K562 (cell line): ENCODE measurements at regions of chr2 and their contacts with region 1.

Region 1: GRCh38 chr2:64457524-64457923 is 3.6 kb downstream of the LGALSL start:
- DNase-seq: no peak
- ATAC-seq: 0 out of 3 replicates have a peak, but pooled peaks have one; percentile 25
- H3K4me3 ChIP-seq: no peak overlapping the region
- H3K27ac ChIP-seq: no peak overlapping the region
- H3K4me1 ChIP-seq: peaks cover 0 to 14% of the 10 kb centered on the region in 2 experiments; a peak in 2 of 5 replicates
- H3K27me3 ChIP-seq: peaks cover 14 to 21% of the 10 kb centered on the region in 2 experiments
- CTCF ChIP-seq: peak in 2 of 3 experiments; percentile 16 to 49; a peak in 3 of 6 replicates
- EP300 ChIP-seq: no peak
- POLR2A ChIP-seq: no peak
- RAD21 ChIP-seq: peak; percentile 49 to 63; a peak in 3 of 4 replicates

Region 2: DNA sequence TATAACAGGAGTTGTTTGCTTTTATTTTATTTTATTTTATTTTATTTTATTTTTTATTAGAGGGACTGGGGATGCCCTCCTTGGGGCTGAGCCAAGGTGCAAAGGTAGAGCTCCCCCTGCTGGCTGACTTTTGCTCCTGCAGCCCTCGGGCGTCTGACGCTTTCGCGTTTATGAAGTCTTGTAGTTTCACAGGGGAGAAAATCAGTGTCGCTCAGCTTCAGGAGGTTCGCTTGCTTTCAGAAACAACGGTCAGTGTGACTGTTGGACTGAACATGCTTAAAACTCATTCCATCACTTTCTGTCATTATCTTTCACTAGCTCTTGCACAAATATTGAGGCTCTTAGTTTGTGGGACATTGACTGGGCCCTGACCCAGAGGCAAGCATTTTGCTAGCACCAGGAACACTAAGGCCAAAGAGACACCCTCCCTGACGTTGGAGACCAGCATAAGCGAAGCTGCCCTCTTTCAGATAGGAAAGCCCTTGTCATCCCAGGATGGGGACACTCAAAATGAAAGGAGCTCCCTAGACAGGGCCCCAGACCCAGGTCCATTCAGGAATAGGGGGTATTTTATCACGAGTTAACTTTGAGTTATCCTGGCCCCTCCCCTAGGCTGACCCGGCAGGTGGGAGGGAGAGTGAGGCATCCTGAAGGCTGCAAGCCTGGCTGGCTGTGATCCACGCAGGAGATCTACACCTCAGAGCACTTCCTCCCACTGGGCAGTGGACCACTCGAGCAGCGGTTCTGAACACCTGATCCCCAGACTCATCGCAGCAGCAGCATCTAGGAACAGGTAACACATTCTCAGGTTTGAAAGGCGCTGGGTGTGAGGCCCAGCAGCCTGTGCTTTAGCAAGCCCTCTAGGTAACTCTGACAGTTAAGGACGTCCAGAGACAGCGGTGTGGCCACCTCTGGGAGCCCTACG is 30.8 kb after region 1 on chr2:
- CTCF ChIA-PET with region 1: interaction called, 4 read pairs
- POLR2A ChIA-PET with region 1: no interaction called
- in situ Hi-C with region 1: no loop called
- intact Hi-C with region 1: loop called (anchors 2 kb)
- DNase-seq: peak; percentile 68 to 79 (median 78)
- ATAC-seq: peak; percentile 92
- H3K4me3 ChIP-seq: no peak overlapping the region
- H3K27ac ChIP-seq: no peak overlapping the region
- H3K4me1 ChIP-seq: no peaks in the 10 kb centered on the region
- H3K27me3 ChIP-seq: peaks cover 15 to 36% of the 10 kb centered on the region in 2 experiments
- CTCF ChIP-seq: peak; percentile 80 to 91 (median 86)
- EP300 ChIP-seq: no peak
- POLR2A ChIP-seq: no peak
- RAD21 ChIP-seq: peak; percentile 77 to 92